ENCODE measurements at regions of chr7 and their contacts with region 1.

Region 1: GRCh38 chr7:15555381-15555859 is 6.4 kb downstream of the AGMO start:
- DNase-seq: no peak
- H3K4me3 Mint-ChIP-seq: no peak overlapping the region
- H3K27ac Mint-ChIP-seq: peak overlapping the region; percentile 79
- H3K4me1 Mint-ChIP-seq: peaks cover 40% of the 10 kb centered on the region
- H3K27me3 Mint-ChIP-seq: no peaks in the 10 kb centered on the region
- CTCF ChIP-seq: no peak

Region 2: DNA sequence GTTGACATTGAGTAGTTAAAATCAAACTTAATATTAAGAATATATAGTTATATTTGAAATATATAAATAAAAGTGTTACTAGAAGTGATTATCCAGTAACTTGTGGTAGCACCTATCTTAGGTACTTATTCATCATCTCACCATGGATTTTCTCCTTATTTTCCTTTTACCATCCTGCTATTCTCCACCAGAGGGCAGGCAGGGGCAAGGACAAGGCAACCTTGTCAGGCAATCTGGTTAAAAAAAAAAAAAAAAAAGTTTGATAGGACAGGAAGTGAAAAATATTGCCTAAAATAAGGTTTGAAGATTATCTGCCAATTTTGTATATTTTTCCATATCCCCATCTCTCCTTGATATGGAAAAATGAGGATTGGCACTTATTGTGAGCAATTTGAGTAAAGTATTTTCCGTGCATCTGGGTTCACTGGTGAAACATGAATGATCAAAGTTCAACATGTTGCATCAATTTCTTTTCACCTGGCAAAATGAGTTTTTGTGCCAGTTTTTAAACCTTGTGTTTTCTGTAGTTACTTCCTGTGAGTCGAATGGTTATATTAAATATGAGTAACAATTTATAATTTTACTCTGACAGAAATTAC is 250.3 kb before region 1 on chr7:
- CTCF ChIA-PET with region 1: no interaction called
- intact Hi-C with region 1: loop called (anchors 5 kb)
- DNase-seq: peak; percentile 78
- H3K4me3 Mint-ChIP-seq: no peak overlapping the region
- H3K27ac Mint-ChIP-seq: no peak overlapping the region
- H3K4me1 Mint-ChIP-seq: no peaks in the 10 kb centered on the region
- H3K27me3 Mint-ChIP-seq: no peaks in the 10 kb centered on the region
- CTCF ChIP-seq: peak; percentile 68

Region 3: DNA sequence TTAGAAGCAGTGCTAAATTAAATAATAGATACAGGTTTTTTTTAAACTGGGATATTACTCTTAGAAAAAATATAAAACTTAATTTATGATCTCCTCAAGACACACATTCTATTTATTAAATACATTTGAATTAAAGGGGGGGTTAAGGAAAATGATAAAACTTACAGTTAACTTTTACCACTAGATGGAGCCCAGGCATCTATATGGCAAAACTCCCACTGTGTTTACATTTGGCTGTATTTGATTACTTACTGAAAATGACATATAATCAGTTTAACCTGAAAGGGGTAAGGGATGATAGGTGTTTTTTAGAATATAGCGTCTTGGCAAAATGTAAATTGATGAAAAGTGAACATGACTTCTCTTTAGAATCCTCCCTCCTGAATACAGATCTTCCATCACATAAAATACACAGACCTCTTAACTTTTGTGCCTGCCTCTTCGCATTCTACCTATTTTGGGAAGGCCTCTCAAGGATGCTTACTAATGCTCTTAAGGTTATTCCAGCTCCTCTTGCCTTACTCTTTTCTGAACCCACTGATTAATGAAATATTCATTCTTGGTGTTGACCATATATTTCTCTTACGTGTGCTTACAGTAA is 229.3 kb before region 1 on chr7:
- CTCF ChIA-PET with region 1: no interaction called
- intact Hi-C with region 1: loop called (anchors 1 kb)
- DNase-seq: no peak
- H3K4me3 Mint-ChIP-seq: no peak overlapping the region
- H3K27ac Mint-ChIP-seq: no peak overlapping the region
- H3K4me1 Mint-ChIP-seq: no peaks in the 10 kb centered on the region
- H3K27me3 Mint-ChIP-seq: no peaks in the 10 kb centered on the region
- CTCF ChIP-seq: peak; percentile 58

Region 4: GRCh38 chr7:15376600-15376999 is 178.8 kb before region 1 on chr7:
- CTCF ChIA-PET with region 1: no interaction called
- intact Hi-C with region 1: loop called (anchors 1 kb)
- DNase-seq: no peak
- H3K4me3 Mint-ChIP-seq: no peak overlapping the region
- H3K27ac Mint-ChIP-seq: no peak overlapping the region
- H3K4me1 Mint-ChIP-seq: peaks cover 29% of the 10 kb centered on the region
- H3K27me3 Mint-ChIP-seq: no peaks in the 10 kb centered on the region
- CTCF ChIP-seq: no peak

Region 5: DNA sequence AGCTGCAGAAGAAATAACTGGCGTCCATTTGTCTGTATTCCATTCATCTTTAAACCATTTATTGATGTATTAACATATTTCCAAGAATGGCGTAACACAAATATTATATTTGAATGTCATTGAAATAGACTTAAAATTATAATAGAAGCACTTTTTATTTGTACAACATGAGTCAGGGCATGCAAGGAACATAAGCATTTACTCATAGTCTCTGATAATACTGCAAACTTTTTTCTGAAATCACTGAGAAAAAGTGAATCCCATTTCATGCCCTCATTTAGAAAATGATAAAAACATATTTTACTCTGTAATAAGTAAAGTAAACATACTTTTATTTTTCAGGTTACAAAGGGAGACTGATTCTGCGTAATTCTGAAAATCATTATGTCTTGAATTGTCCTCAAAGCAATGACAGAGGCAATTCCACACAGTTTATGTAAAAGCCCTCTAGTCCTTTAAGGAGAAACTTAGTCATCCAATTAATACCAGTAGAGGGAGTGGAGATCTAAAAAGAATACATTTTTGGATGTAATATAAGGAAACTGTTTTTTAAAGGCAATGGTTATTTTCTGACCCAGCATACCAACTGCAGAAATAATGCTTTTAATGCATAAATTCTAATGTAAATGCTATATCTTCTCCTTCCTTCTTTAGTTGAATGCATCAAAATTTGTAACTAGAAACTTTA is 51.7 kb before region 1 on chr7:
- CTCF ChIA-PET with region 1: no interaction called
- intact Hi-C with region 1: loop called (anchors 2 kb)
- DNase-seq: no peak
- H3K4me3 Mint-ChIP-seq: no peak overlapping the region
- H3K27ac Mint-ChIP-seq: no peak overlapping the region
- H3K4me1 Mint-ChIP-seq: no peaks in the 10 kb centered on the region
- H3K27me3 Mint-ChIP-seq: no peaks in the 10 kb centered on the region
- CTCF ChIP-seq: peak; percentile 25

Region 6: DNA sequence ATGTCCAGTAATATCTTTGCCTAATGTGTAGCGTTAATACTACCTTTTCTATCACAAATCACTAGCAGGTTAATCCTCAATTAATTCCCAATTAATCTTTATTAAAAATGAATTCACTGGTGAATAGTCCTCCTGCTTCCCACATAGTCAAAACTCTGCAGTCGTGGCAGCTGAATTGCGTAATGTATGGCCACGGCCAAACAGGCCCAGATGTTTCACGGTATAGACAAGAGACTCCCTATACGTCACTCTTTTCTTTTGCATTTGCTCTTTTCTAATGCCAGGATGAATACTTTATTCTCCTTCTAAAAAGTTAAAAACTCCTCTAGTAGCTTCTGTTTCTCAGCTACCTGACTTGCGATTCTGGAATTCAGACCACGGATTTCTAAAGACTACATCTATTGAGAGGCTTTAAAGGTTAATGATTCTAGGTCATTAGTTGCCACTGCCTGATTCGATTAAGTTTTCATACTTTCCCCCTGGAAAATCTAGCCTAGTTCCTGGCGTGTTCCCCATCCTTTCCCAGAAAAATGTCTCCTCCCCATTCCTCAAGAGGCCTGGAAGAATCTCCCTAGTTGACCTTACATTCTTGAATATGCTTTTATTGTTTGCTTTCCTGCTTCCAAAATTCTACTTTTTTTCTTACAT is 114.1 kb after region 1 on chr7:
- CTCF ChIA-PET with region 1: no interaction called
- intact Hi-C with region 1: no loop called
- DNase-seq: no peak
- H3K4me3 Mint-ChIP-seq: peak overlapping the region; percentile 31
- H3K27ac Mint-ChIP-seq: peak overlapping the region; percentile 37
- H3K4me1 Mint-ChIP-seq: peaks cover 57% of the 10 kb centered on the region
- H3K27me3 Mint-ChIP-seq: no peaks in the 10 kb centered on the region
- CTCF ChIP-seq: no peak

Region 7: GRCh38 chr7:16071246-16071857 is 515.9 kb after region 1 on chr7:
- CTCF ChIA-PET with region 1: interaction called, 3 read pairs
- intact Hi-C with region 1: loop called (anchors 2 kb)
- DNase-seq: peak; percentile 34
- H3K4me3 Mint-ChIP-seq: no peak overlapping the region
- H3K27ac Mint-ChIP-seq: no peak overlapping the region
- H3K4me1 Mint-ChIP-seq: peaks cover 10% of the 10 kb centered on the region
- H3K27me3 Mint-ChIP-seq: no peaks in the 10 kb centered on the region
- CTCF ChIP-seq: peak; percentile 86

Measured in Calu3 (cell line).